CD4-positive, alpha-beta T cell (primary cell): ENCODE measurements at regions of chr2 and their contacts with region 1.

Region 1: GRCh38 chr2:236180831-236181453 is 12.8 kb upstream of the GBX2 start:
- DNase-seq: peak in 5 of 14 experiments; percentile 6 to 43 (median 20)
- ATAC-seq: no peak
- H3K4me3 ChIP-seq: no peak overlapping the region
- H3K4me3 Mint-ChIP-seq: no peak overlapping the region
- H3K27ac ChIP-seq: no peak overlapping the region
- H3K27ac Mint-ChIP-seq: no peak overlapping the region
- H3K4me1 ChIP-seq: peaks cover 17% of the 10 kb centered on the region
- H3K4me1 Mint-ChIP-seq: peaks cover 12% of the 10 kb centered on the region
- H3K27me3 ChIP-seq: peaks cover 52 to 82% of the 10 kb centered on the region in 2 experiments
- H3K27me3 Mint-ChIP-seq: peaks cover 89% of the 10 kb centered on the region
- CTCF ChIP-seq: peak; percentile 47

Region 2: DNA sequence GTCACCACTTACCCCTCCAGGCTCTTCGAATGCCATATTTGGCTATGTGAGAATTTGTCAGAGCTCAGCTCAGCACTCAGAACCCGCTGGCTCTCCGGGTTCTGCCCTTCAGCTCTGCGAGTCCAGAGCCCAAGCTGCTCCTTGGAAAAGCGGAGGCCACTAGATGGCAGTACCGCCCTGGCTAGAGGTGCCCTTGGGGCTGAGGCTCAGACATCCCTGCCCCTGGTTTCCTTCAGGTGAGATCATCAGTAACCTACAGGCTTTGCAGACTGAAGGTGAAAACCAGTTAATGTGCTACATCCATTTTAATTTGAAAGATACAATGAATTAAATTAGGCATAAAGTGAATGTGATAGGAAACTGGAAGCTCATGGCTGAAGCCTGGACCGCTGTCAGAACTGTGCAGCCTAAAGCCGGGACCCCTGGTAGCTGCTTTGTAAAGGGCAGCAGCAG is 401.5 kb before region 1 on chr2:
- CTCF ChIA-PET with region 1: interaction called, 6 read pairs
- POLR2A ChIA-PET with region 1: no interaction called
- intact Hi-C with region 1: loop called in 1 of 2 experiments (anchors 2 kb)
- DNase-seq: peak; percentile 11 to 63 (median 39)
- ATAC-seq: peak; percentile 48
- H3K4me3 ChIP-seq: no peak overlapping the region
- H3K4me3 Mint-ChIP-seq: no peak overlapping the region
- H3K27ac ChIP-seq: no peak overlapping the region
- H3K27ac Mint-ChIP-seq: no peak overlapping the region
- H3K4me1 ChIP-seq: no peaks in the 10 kb centered on the region
- H3K4me1 Mint-ChIP-seq: no peaks in the 10 kb centered on the region
- H3K27me3 ChIP-seq: no peaks in the 10 kb centered on the region
- H3K27me3 Mint-ChIP-seq: peaks cover 36% of the 10 kb centered on the region
- CTCF ChIP-seq: peak; percentile 65